ENCODE measurements at regions of chr13 and their contacts with region 1.

Region 1: GRCh38 chr13:95191821-95192563 is 109.3 kb downstream of the ABCC4 start:
- DNase-seq: peak; percentile 62 to 79
- H3K4me3 ChIP-seq: no peak overlapping the region
- H3K27ac ChIP-seq: no peak overlapping the region
- H3K4me1 ChIP-seq: no peaks in the 10 kb centered on the region
- H3K27me3 ChIP-seq: no peaks in the 10 kb centered on the region
- CTCF ChIP-seq: peak; percentile 38 to 50

Region 2: GRCh38 chr13:94435604-94436226 is 756.3 kb before region 1 on chr13:
- intact Hi-C with region 1: no loop called
- DNase-seq: no peak
- H3K4me3 ChIP-seq: no peak overlapping the region
- H3K27ac ChIP-seq: no peak overlapping the region
- H3K4me1 ChIP-seq: no peaks in the 10 kb centered on the region
- H3K27me3 ChIP-seq: no peaks in the 10 kb centered on the region
- CTCF ChIP-seq: peak; percentile 50 to 60

Region 3: DNA sequence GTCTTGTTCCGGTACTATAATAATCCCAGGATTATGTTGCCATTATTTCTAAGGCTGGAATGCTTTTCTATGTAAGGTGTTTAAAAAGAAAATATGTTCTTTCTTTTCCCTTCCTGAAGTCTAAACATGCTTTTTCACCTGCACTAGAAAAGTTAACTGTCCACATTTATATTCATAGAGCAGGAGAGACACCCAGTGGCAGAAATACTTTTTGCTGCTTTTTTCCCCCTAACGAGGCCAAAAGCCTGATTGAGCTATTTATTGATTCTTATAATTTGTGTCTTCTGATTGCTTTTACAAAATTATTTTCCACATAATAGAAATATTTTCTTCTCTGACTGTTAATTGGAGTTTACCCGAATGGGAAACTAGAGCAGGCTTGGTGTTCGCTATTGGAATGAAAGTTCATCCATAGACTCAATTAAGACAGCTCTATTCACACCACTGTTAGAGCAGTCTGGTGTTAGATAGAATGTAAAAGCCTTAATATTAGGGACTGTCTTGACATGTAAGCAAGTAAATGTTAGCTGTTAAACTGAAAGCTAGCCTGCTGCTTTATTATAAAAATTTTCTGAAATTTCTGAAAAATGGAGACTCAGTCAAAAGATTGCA is 574.5 kb before region 1 on chr13:
- intact Hi-C with region 1: no loop called
- DNase-seq: no peak
- H3K4me3 ChIP-seq: no peak overlapping the region
- H3K27ac ChIP-seq: no peak overlapping the region
- H3K4me1 ChIP-seq: no peaks in the 10 kb centered on the region
- H3K27me3 ChIP-seq: no peaks in the 10 kb centered on the region
- CTCF ChIP-seq: peak; percentile 56 to 66

Region 4: GRCh38 chr13:95382411-95382810 is 190.4 kb after region 1 on chr13:
- intact Hi-C with region 1: loop called (anchors 5 kb)
- DNase-seq: no peak
- H3K4me3 ChIP-seq: no peak overlapping the region
- H3K27ac ChIP-seq: no peak overlapping the region
- H3K4me1 ChIP-seq: peaks cover 0 to 11% (median 0%) of the 10 kb centered on the region in 4 donors
- H3K27me3 ChIP-seq: peaks cover 0 to 3% of the 10 kb centered on the region in 2 donors
- CTCF ChIP-seq: no peak

Region 5: GRCh38 chr13:95403828-95404522 is 212.0 kb after region 1 on chr13:
- intact Hi-C with region 1: loop called (anchors 1 kb)
- DNase-seq: peak; percentile 78 to 83
- H3K4me3 ChIP-seq: peak overlapping the region; percentile 12 to 48
- H3K27ac ChIP-seq: no peak overlapping the region
- H3K4me1 ChIP-seq: peaks cover 0 to 12% (median 6%) of the 10 kb centered on the region in 4 donors
- H3K27me3 ChIP-seq: peaks cover 0 to 16% of the 10 kb centered on the region in 2 donors
- CTCF ChIP-seq: peak; percentile 85 to 89

Region 6: DNA sequence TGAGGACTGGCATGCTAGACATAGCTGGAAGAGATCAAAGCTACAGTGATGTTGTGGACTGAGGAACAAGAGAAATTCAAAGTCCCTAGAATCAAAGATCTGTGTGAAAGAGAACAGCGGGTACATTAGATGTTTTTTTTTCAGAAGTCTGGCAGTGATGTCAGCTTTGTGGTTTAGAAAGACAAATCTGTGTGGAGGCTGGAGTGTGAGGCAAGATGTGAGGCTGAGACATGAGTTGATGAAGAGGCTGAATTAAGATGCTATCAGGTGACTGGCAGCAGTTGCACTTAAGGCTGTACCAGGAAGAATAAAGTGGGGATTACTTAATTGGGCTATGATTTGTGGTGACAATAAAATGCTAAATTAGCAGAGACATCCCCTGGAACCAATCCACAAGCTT is 531.4 kb after region 1 on chr13:
- intact Hi-C with region 1: no loop called
- DNase-seq: no peak
- H3K4me3 ChIP-seq: no peak overlapping the region
- H3K27ac ChIP-seq: no peak overlapping the region
- H3K4me1 ChIP-seq: no peaks in the 10 kb centered on the region
- H3K27me3 ChIP-seq: no peaks in the 10 kb centered on the region
- CTCF ChIP-seq: no peak

Measured in tibial artery (tissue), 4 donors.